Psoas muscle (tissue), 8 donors: ENCODE measurements at regions of chr18 and their contacts with region 1.

Region 1: GRCh38 chr18:26370037-26370436 is 143.8 kb downstream of the TAF4B start:
- DNase-seq: no peak
- ATAC-seq: no peak
- H3K4me3 ChIP-seq: no peak overlapping the region
- H3K27ac ChIP-seq: no peak overlapping the region
- H3K4me1 ChIP-seq: no peaks in the 10 kb centered on the region
- H3K27me3 ChIP-seq: no peaks in the 10 kb centered on the region
- CTCF ChIP-seq: no peak

Region 2: GRCh38 chr18:26317398-26317797 is 52.6 kb before region 1 on chr18:
- intact Hi-C with region 1: loop called in 1 of 2 experiments (anchors 10 kb)
- DNase-seq: no peak
- ATAC-seq: no peak
- H3K4me3 ChIP-seq: no peak overlapping the region
- H3K27ac ChIP-seq: no peak overlapping the region
- H3K4me1 ChIP-seq: no peaks in the 10 kb centered on the region
- H3K27me3 ChIP-seq: no peaks in the 10 kb centered on the region
- CTCF ChIP-seq: no peak